Gastrocnemius medialis (tissue), 4 donors: ENCODE measurements at regions of chr14 and their contacts with region 1.

Region 1: GRCh38 chr14:95515596-95516552 is 576 bp downstream of the SYNE3 start:
- DNase-seq: peak in 1 of 2 donors; percentile 64
- ATAC-seq: peak; percentile 49
- H3K4me3 ChIP-seq: peak overlapping the region; percentile 64 to 78 (median 70)
- H3K27ac ChIP-seq: peak overlapping the region; percentile 69 to 73 (median 72)
- H3K4me1 ChIP-seq: peaks cover 49 to 53% of the 10 kb centered on the region in 2 donors
- H3K27me3 ChIP-seq: no peaks in the 10 kb centered on the region
- CTCF ChIP-seq: peak; percentile 30 to 60 (median 43)
- POLR2A ChIP-seq: peak in 1 of 2 donors; percentile 13

Region 2: DNA sequence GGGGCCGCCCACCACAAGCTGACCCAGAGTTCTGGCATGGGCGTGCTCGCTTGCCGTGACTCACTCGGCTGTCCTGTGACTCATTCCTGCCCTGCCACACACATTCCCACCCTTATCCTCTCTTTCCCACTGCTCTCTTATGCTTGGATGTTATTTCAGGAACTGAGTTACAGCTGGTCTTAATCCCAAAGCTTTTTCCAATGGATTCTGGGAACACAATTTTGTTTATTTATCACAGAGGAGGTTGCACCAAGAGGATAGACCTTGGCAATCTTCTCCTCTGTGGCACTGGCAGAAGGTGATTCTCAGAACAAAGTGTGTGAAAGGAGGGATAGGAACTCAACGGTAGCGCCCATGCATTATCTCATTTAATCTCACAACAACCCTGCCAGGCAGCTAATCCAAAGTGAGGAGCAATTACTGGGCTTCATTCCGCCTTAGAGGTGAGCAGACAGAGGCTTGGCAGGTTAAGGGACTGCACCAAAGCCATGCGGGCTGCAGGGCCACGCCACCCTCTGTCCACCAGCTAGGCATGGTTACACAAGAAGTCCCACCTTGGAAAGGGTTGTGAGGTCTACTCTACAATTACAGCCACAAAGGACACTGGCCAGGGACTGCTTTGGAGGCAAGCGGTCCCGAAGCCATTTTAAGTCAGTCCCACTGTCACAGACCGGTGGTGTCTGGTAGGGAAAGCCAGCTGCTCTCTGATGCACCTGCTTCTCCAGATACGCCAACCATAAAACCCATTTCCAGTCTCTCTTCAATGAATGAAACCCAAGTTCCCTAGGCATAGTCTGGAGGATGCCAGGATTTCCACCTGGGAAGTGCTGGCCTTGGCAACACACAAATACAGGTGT is 32.3 kb before region 1 on chr14:
- in situ Hi-C with region 1: no loop called
- intact Hi-C with region 1: loop called (anchors 5 kb)
- DNase-seq: peak; percentile 63 to 80
- ATAC-seq: peak; percentile 84 to 89
- H3K4me3 ChIP-seq: no peak overlapping the region
- H3K27ac ChIP-seq: peak overlapping the region; percentile 59 to 73 (median 68)
- H3K4me1 ChIP-seq: peaks cover 19 to 21% of the 10 kb centered on the region in 2 donors
- H3K27me3 ChIP-seq: no peaks in the 10 kb centered on the region
- CTCF ChIP-seq: no peak
- POLR2A ChIP-seq: no peak

Region 3: DNA sequence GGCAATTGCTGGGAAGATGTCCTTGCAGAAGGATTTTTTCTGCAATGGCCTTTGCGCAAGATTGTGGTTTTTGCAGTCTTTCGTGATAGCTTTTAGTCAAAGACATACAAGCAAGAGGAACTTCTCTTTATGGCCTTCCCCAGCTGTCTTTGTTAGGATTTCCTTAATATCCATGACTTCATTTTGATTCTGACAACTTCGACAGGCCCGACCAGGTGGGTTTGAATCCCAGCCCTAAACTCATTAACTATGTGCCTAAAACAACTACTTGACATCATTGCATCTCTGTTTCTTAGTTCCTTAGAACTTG is 1268.0 kb after region 1 on chr14:
- in situ Hi-C with region 1: no loop called
- intact Hi-C with region 1: no loop called
- DNase-seq: no peak
- ATAC-seq: no peak
- H3K4me3 ChIP-seq: no peak overlapping the region
- H3K27ac ChIP-seq: no peak overlapping the region
- H3K4me1 ChIP-seq: no peaks in the 10 kb centered on the region
- H3K27me3 ChIP-seq: no peaks in the 10 kb centered on the region
- CTCF ChIP-seq: no peak
- POLR2A ChIP-seq: no peak